ENCODE measurements at regions of chr2 and their contacts with region 1.

Region 1: DNA sequence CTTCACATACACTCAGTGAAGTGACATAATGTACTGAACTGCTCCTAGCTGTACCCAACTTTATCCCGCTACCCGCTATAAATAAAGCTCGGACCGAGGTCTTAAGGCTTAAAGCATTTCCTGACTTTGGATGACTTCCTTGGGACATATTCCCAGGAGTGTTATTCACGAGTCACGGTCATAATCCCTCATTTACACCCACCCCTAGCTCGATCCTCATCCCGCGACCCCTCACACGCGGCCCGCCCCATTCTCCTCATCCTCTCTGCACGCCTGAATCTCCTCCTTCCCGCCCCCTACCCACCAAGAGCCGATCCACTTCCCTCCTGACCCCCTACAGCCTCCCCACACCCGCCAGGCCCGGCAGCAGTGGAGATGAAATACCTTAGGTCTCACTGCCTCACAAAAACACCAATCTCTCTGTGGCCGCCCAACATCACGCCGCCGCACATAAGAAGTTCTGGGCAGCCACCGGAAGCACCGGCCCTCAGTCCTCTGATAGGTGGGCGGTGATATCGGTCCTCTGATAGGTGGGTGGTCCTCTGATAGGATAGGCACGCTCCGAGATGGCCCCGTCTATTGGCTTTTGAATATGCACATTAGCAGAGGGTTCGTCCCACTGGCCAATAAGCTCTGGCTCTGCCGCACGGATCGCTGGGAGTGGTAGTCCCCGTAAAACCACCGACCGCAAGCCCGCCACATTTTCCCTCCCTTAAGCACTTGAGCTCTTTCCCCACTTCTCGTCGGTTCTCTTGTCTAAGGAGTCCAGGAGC is at the start of gene WDCP:
- DNase-seq: peak; percentile 91 to 99
- H3K4me3 ChIP-seq: peak within 1 kb of the TSS; percentile 73
- H3K27ac ChIP-seq: no peak within 1 kb of the TSS
- H3K4me1 ChIP-seq: peaks cover 17% of the 10 kb centered on the region; the same call in 1 of the 2 replicates
- H3K27me3 ChIP-seq: peaks cover 10% of the 10 kb centered on the region; the same call in 1 of the 2 replicates
- CTCF ChIP-seq: no peak
- total RNA-seq, gene WDCP: 7.9 and 13.5 TPM in 2 replicates

Region 2: GRCh38 chr2:23360571-23361125 is 686.5 kb before region 1 on chr2:
- CTCF ChIA-PET with region 1: no interaction called
- POLR2A ChIA-PET with region 1: no interaction called
- intact Hi-C with region 1: no loop called
- DNase-seq: no peak
- H3K4me3 ChIP-seq: no peak overlapping the region
- H3K27ac ChIP-seq: no peak overlapping the region
- H3K4me1 ChIP-seq: no peaks in the 10 kb centered on the region
- H3K27me3 ChIP-seq: peaks cover 23% of the 10 kb centered on the region
- CTCF ChIP-seq: no peak

Region 3: GRCh38 chr2:23954325-23955014 is 92.6 kb before region 1 on chr2:
- CTCF ChIA-PET with region 1: no interaction called
- POLR2A ChIA-PET with region 1: interaction called, 17 read pairs
- intact Hi-C with region 1: no loop called
- DNase-seq: no peak
- H3K4me3 ChIP-seq: no peak overlapping the region
- H3K27ac ChIP-seq: no peak overlapping the region
- H3K4me1 ChIP-seq: no peaks in the 10 kb centered on the region
- H3K27me3 ChIP-seq: no peaks in the 10 kb centered on the region
- CTCF ChIP-seq: no peak

Region 4: DNA sequence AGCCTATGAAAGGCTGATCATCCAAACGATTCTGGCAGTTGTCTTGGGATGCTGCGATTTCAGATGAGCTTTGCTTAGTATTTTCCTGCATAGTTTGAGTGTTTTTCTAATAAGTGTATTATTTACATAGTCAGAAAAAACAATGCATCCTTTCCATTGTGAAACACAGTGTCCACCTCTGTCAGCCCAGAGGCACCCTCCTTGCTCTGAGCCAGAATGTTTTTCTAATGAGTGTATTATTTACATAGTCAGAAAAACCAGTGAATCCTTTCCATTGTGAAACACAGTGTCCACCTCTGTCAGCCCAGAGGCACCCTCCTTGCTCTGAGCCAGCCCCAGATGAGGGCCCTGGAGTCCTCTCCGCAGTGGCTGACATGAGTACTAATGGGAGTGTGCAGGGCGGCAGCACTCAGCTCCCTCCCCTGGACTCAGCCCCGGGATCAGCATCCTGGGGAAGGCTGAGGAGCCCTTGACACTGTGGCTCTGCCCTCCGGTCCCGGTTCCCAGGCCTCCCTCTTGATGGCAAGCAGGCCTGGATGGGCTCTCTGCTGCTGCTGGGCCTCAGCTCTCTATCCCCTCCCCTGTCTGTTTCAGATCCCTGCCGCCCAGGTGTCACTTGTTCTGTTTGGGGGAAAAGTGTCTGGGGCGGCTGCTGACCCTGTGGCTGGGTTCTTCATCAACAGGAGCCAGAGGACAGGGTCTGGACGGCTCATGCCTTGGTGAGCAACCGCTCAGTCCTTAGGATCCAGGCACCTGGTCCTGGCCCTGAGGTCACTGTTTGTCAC is 31.4 kb before region 1 on chr2:
- CTCF ChIA-PET with region 1: no interaction called
- POLR2A ChIA-PET with region 1: interaction called, 10 read pairs
- intact Hi-C with region 1: loop called (anchors 2 kb)
- DNase-seq: peak; percentile 84 to 99
- H3K4me3 ChIP-seq: no peak overlapping the region
- H3K27ac ChIP-seq: peak overlapping the region; percentile 55
- H3K4me1 ChIP-seq: peaks cover 45% of the 10 kb centered on the region
- H3K27me3 ChIP-seq: no peaks in the 10 kb centered on the region
- CTCF ChIP-seq: no peak

Region 5: DNA sequence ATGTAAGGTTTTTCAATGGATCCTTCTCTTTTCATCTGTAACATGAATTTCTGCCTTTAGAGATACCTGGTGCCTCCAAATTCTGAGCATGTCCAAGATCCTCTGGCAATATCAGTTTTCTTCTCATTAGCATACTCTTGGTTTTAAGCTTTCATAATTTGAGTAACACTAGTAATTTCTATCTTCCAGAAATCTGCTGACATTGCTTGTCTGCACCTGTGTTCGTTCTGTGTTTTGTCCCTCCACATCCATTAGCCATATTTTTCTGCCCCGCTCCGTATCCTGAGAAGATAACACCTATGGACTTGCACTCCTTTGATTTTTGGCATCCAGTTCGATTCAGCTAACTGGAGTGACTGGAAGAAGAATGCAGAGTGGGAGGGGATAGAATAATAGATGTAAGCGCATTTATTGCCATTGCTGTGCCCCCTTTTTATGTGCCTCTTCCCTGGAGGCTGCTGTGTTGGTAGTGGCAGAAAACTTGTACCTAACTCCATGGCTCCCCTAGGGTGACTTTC is 345.5 kb after region 1 on chr2:
- CTCF ChIA-PET with region 1: interaction called, 18 read pairs
- POLR2A ChIA-PET with region 1: no interaction called
- intact Hi-C with region 1: no loop called
- DNase-seq: no peak
- H3K4me3 ChIP-seq: no peak overlapping the region
- H3K27ac ChIP-seq: no peak overlapping the region
- H3K4me1 ChIP-seq: no peaks in the 10 kb centered on the region
- H3K27me3 ChIP-seq: no peaks in the 10 kb centered on the region
- CTCF ChIP-seq: no peak

Region 6: DNA sequence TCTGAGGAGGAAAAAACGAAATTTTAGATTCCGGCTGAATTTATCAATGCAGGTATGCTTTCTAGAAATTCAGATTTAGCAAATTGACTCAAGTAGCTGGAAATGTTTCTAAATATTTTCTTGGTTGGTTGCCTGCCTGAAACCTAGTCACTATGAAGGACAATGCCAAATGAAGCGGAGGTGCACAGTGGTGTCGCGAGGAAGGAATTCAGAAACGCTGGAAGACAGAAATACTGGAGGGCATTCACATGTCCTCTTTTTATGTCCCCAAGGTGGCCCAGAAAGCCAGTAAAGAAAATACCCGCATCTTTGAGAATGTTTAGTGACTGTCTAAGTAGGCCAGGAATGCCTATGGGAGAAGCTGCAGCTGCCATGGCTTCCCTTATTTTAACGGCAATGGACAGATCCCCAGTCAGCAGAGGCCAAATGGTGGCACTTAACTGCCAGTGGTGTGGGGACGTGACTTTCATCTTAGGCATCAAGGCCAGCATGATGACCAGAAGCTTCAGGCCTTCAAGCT is 979.0 kb after region 1 on chr2:
- CTCF ChIA-PET with region 1: no interaction called
- POLR2A ChIA-PET with region 1: interaction called, 15 read pairs
- intact Hi-C with region 1: no loop called
- DNase-seq: no peak
- H3K4me3 ChIP-seq: no peak overlapping the region
- H3K27ac ChIP-seq: no peak overlapping the region
- H3K4me1 ChIP-seq: no peaks in the 10 kb centered on the region
- H3K27me3 ChIP-seq: 0 out of 2 replicates have a peak, but pooled peaks cover 24% of the 10 kb centered on the region
- CTCF ChIP-seq: no peak